ENCODE measurements at regions of chr1 and their contacts with region 1.

Region 1: GRCh38 chr1:179190861-179191260 is 38.6 kb downstream of the ABL2 start:
- DNase-seq: peak; percentile 32
- ATAC-seq: peak; percentile 44 to 80

Region 2: DNA sequence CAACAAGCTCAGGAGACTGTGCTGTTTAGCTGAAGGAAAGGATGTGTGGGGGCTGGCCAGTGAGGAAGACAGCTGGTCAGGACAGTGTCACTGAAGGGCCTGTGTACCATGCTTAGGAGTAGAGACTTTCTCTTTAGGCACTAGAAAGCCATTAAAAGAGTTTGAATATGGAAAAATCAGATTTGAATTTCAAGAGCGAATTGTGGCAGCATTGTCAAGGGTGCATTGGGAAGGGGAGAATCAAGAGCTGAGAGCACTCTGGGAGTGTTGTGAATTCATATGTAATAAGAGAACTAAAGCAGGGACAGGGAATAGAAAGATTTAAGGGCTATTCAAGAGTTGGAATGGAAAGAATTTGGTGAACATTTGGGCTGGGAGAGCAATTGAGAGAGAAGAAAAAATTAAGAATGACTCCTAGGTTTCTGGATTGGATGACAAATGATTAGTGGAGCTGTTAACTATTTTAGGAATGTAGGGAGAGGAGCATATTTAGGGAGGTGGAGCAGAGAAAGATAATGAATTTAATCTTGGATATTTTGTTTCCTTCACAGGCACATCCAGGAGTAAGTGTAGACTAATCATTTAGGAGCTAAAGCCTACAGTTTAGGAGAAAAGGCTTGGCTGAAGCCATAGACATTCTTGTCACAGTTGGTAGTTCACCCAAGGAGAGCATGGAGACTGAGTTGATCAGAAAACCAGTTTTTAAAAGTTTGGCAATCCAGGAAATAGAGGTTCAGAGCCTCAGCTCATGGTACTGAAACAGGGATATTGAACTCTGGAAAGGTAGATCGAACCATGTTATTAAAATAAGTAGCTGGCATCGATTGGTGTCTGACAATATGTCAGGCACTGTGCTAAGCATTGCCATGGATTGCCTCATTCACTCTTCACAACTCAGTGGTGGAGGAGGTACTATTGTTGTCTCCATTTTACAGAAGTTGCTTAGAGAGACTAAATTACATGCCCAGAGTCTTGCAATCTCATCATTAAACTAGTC is 132.1 kb before region 1 on chr1:
- intact Hi-C with region 1: no loop called
- DNase-seq: no peak
- ATAC-seq: peak in 1 of 2 donors; percentile 79

Region 3: GRCh38 chr1:179081687-179082332 is 109.1 kb before region 1 on chr1 and contains the start of gene TOR3A:
- intact Hi-C with region 1: loop called (anchors 2 to 10 kb)
- DNase-seq: peak; percentile 94
- ATAC-seq: peak; percentile 97 to 98
- total RNA-seq, gene TOR3A: 12.7 to 12.9 TPM

Region 4: GRCh38 chr1:179121159-179121938 is 69.5 kb before region 1 on chr1:
- intact Hi-C with region 1: loop called in 1 of 2 experiments (anchors 5 kb)
- DNase-seq: no peak
- ATAC-seq: peak in 1 of 2 donors; percentile 21

Measured in left cardiac atrium (tissue), 4 donors.